ENCODE measurements at regions of chr6 and their contacts with region 1.

Region 1: DNA sequence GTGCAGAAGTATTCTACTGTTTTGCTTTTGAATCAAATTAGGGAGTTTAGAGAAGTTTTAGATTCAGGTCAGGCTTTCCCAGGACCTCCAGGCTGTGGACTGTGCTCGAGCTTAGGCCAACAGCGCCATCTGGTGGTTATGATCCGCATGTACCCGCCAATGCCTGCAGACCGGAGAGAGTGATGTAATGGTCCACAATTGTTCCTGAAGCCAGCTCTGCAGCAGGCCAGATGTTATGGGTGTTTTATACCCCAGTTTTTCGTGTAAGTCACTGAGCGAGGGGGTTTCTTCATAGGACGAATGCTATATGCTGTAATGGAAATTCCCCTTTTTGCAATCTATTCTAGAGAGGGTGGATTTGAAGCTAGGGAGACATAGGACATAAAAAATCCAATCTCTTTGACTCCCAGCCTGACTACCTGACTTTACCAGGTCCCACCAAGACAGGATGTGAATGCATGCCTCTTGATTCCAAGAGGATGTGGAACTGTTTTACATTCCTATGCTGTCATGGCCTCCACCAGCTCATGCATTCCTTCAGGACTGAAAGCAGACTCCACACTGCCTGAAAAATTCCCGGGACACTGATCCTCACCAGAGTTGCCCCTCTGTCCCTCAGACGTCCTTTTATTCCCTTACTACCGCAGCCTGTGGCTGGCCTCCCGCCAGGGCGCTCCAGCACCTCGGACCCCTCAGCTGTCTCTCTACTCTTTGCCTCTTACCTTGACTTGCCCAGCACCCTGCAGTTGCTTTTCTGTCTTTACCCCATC is 41.2 kb upstream of the LY86 start:
- DNase-seq: peak; percentile 83
- CTCF ChIP-seq: peak; percentile 93

Region 2: DNA sequence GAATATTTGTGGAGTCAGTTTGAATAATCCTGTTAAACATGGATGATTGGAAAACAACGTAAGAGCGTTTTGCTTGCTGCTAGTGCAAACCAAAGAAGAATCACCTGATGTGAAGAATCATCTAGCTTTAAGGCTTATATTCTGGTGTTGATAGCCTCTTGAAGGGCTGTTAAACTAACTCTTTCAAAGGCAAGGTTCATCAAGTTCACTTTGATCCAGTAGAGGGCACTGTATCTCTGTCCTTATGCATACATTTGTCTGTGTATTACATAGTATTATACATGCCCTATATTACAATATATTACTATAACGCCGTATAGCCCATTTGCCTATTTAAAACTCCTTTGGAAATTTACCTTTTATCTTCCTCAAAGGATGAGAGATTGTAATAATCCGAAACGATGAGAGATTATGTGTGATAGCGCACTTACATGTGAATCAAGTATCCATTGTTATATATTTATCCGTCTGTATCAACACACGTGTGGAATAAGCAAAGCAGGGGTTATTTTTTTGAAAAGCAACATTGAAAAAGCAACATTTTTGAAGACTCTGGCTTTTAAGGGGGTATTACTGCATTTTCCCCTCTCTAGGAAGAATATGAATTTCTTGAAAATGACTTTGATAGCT is 489.8 kb before region 1 on chr6:
- CTCF ChIA-PET with region 1: interaction called, 46 read pairs
- POLR2A ChIA-PET with region 1: no interaction called
- DNase-seq: peak; percentile 56
- CTCF ChIP-seq: peak; percentile 37

Region 3: GRCh38 chr6:6131492-6132109 is 415.7 kb before region 1 on chr6:
- CTCF ChIA-PET with region 1: interaction called, 11 read pairs
- POLR2A ChIA-PET with region 1: no interaction called
- DNase-seq: peak; percentile 51
- CTCF ChIP-seq: peak; percentile 29

Region 4: GRCh38 chr6:6305575-6305974 is 241.7 kb before region 1 on chr6:
- CTCF ChIA-PET with region 1: no interaction called
- POLR2A ChIA-PET with region 1: no interaction called
- DNase-seq: no peak
- CTCF ChIP-seq: no peak

Region 5: DNA sequence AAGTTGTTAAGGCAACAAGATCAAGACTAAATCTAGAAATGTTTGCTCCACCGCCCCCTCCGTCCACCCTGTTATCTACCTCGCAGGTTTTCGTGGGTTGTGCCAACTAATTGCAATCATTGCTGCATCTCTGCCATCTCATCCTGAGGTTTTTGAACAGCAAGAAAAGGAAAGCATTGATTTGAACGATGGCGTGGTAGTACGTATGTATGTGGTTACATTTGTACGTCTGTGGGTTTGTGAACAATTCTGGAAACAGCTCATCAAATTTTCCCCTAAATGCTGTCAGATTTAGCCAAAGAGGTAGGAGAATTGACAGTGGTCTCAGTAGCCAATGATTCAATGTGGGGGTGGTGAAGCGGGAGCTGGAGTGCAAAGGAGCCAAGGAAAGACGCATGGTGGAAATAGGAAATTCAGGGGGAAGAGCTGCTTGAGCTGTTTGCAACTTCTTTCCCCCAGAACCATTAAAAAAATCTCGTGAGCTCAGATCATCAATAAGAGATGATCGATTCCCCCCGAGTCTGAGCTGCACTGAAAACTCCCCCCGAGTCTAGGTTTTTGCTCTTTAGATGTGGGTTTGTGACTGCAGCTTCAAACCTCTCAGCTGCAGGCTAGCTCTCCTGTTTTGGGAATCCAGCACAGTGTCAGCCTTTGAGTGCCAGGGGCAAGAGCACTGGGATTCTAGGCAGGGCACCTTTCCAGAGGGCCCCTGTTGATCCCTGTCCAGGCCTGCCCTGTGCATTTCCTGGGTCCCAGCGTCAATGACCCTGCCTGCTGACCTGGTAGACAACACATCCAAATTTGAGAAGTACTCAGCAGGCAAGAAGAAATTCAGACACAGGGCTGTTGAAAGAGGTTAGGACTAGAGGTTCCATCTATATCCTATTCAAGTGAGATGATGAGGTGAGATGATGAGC is 31.3 kb before region 1 on chr6:
- CTCF ChIA-PET with region 1: interaction called, 24 read pairs
- POLR2A ChIA-PET with region 1: no interaction called
- DNase-seq: no peak
- CTCF ChIP-seq: no peak

Region 6: GRCh38 chr6:6533176-6533575 is 14.1 kb before region 1 on chr6:
- CTCF ChIA-PET with region 1: interaction called, 45 read pairs
- POLR2A ChIA-PET with region 1: no interaction called
- DNase-seq: no peak
- CTCF ChIP-seq: no peak

Region 7: DNA sequence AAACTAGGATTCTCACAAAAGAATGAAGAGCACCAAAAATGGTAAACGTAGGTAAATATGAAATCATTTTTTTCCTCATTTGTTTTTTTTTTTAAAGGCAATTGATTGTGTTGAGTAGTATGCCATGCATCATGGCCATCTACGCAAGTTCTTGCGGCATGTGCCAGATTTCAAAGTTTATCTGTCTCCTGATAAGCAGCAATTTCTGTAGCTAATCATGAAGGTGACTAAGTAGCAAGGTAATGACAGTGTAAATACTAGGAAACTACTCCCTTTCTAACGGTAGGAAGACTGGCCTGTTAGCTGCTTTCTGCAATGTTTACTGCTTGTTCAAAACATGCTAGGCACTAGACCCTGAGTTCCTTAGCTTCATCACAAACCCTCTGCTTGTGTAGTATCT is 27.8 kb after region 1 on chr6:
- CTCF ChIA-PET with region 1: interaction called, 18 read pairs
- POLR2A ChIA-PET with region 1: no interaction called
- DNase-seq: no peak
- CTCF ChIP-seq: no peak

Region 8: DNA sequence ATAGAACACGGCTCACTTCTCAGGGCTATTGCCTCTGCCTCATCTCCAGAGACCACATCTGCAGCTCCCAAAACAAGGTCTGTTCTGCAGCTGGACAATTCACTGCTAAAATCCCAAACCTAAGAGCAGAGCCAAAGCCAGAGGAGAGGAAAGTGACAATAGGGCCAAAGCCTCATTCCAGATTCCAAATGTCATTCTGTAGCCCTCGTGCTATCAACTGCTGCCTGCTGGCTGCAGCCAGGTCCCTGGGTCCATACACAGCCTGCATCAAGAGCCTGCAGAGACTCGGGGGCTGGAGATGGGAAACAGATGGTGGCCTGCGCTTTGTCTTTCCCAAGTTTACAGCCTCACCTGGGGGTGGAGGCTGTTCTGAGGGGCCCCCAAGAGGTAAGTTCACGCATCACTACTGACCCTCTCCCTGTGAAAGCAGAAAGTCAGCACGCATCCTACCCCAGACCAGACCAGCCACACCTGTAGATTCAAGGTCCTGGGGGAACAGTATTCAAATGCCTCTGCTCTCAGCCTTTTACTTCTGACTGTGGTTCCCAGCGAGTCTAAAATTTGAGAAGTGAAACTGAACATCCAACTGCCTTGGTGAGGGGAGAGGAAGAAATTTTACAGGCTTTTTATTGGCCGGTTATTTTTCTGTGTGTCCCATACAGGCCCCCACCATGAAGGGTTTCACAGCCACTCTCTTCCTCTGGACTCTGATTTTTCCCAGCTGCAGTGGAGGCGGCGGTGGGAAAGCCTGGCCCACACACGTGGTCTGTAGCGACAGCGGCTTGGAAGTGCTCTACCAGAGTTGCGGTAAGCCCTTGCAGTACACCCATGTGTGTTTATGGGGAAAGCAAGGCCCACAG is 41.0 kb after region 1 on chr6 and contains the start of gene LY86:
- CTCF ChIA-PET with region 1: interaction called, 19 read pairs
- POLR2A ChIA-PET with region 1: interaction called, 4 read pairs
- DNase-seq: peak; percentile 62
- CTCF ChIP-seq: no peak